ENCODE measurements at regions of chr1 and their contacts with region 1.

Region 1: DNA sequence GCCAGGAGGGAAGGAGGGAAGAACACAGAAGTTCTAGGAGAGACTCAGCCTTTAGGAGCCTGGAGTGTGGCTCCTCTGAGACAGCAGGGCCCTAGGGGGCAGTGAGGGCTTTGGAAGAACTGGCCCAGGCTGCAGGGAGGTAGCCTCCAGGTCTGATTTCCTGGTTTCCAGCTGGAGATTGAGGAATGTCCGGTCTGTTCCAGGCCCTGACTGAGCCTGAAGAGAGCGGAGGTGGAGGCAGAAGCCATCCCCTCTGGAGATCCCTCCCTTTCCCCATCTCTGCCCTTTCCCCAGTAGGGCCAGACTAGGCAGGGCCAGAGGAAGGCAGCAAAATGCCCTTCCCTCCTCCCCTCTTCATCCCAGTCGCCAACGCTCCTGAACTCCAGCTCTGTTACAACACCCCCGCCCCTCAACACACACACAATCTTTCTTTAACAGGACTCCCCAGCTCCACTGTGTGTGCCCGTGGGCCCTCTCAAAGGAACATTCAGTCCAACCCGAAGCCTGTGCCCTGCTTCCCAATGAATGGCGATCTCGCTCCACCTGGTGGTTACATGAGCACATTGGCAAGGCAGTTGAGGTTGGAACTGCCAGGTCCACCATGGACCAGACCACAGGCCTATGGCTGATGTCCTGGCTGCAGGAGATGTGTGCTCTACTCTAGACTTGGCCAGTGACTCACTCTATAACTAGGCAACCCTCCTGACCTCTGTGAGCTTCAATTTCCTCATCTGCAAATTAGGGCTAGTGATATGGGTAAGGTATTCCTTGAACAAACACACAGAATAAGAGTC is 32.0 kb downstream of the MAP7D1 start:
- H3K4me3 ChIP-seq: no peak overlapping the region
- H3K27ac ChIP-seq: no peak overlapping the region; the same call in 1 of the 2 replicates
- H3K4me1 ChIP-seq: no peaks in the 10 kb centered on the region
- CTCF ChIP-seq: peak; percentile 96

Region 2: GRCh38 chr1:36109041-36109679 is 78.8 kb before region 1 on chr1:
- CTCF ChIA-PET with region 1: interaction called, 29 read pairs
- POLR2A ChIA-PET with region 1: no interaction called
- H3K4me3 ChIP-seq: no peak overlapping the region
- H3K27ac ChIP-seq: no peak overlapping the region
- H3K4me1 ChIP-seq: no peaks in the 10 kb centered on the region
- CTCF ChIP-seq: no peak

Region 3: DNA sequence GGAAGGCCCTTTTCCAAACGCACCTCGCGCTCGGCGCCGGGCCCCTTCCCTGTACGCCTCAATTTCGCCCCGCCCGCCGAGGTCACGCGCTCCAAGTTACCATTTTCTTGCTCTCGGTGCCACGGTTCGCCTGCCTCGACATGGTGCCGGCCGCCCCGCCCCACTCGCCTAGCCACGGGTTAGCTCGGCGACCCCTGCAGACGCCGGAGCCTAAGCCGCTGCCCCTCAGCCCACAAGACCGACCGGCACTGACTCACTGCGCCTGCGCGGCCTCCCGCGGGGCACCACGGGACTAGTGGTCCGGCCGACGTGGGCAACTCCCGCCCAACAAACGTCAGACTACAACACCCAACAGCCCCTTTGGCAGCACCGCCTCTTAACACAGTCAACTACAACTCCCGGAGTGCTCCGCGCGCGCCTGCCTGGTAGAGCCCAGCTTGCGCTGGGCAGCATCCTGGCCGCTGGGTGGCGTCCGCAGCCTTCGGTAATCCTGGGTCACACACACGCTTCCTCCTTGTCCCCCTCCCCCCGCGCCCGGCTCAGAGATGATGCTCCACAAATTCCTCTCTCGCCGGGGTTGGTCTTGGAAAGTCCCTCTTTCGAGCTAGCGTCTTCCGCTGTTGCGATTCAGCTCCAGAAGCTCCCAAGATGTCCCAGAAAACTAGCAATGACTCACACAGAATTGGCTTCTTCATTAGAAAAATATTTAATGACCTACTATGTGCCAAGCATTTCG is 38.6 kb before region 1 on chr1 and contains the start of gene TRAPPC3:
- CTCF ChIA-PET with region 1: interaction called, 132 read pairs
- POLR2A ChIA-PET with region 1: interaction called, 26 read pairs
- H3K4me3 ChIP-seq: peak within 1 kb of the TSS; percentile 90
- H3K27ac ChIP-seq: peak within 1 kb of the TSS; percentile 61; the same call in 1 of the 2 replicates
- H3K4me1 ChIP-seq: no peaks in the 10 kb centered on the region
- CTCF ChIP-seq: peak; percentile 99

Region 4: DNA sequence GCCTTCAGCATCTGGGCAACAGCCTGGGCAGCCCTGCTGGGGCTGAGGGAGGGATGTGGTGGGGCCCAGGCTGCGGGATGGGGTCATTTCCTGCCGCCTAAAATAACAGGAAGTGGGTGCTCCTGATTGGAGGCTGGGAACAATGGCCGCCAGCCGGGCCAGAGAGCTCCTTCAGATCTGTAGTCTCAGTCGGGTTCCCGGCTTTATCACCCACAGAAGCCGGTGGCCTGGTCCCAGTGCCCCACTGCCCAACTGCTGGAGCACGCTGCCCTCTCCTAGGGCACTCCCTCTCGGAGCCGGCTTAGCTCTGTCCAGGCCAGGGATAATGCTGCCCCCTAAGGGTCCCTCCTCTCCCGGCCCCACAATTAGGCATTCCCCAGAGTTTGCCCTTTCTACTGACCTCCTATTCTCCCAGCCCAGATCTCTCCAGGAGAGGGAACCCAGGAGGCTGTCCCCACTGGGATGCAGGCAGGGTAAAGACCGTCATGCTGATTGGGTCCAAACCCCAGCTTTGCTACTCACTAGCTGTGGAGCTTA is 27.0 kb before region 1 on chr1:
- CTCF ChIA-PET with region 1: interaction called, 48 read pairs
- POLR2A ChIA-PET with region 1: interaction called, 10 read pairs
- H3K4me3 ChIP-seq: peak overlapping the region; percentile 54
- H3K27ac ChIP-seq: peak overlapping the region; percentile 78
- H3K4me1 ChIP-seq: peaks cover 5% of the 10 kb centered on the region
- CTCF ChIP-seq: peak; percentile 95

Region 5: GRCh38 chr1:36199934-36200741 is 12.1 kb after region 1 on chr1:
- CTCF ChIA-PET with region 1: interaction called, 14 read pairs
- POLR2A ChIA-PET with region 1: interaction called, 3 read pairs
- H3K4me3 ChIP-seq: no peak overlapping the region
- H3K27ac ChIP-seq: no peak overlapping the region
- H3K4me1 ChIP-seq: no peaks in the 10 kb centered on the region
- CTCF ChIP-seq: no peak